ENCODE measurements at regions of chr12 and their contacts with region 1.

Region 1: DNA sequence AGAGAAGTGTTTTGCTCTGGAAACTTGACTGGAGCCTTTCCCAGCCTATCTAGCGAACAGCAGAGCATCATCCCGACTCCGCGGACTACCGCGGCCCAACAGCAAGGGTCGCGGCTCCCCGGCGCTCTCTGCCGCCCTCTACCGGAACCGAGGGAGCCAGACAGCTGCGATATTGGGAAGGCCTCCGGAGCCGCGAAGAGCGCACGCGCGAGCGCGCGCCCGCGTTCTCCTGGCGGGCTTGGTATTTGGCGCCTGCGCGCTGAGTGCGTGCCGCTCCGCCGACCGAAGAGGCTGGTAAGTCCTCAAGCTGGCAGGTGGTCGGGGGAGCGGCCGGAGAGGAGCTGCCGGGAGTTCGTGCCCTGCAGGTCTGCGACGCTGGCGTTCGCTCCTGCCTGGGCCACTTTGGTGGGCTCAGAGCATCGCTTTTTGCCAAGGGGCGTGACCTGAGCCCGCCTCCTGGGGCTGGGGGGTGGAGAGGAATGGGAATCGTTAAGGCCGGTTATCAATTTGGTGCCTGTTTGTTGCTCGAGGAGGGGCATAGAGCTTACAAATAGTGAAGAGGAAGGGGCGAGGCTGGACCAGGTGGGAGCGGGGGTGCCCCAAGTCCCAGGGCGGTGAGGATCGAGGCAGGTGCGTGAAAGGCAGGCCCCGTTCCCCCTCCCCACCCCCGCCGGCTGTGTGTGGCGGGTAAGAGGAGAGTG is at the start of gene TMEM106C:
- DNase-seq: peak; percentile 80
- ATAC-seq: peak; percentile 96
- H3K4me3 ChIP-seq: peak within 1 kb of the TSS; percentile 79 to 80
- H3K27ac ChIP-seq: peak within 1 kb of the TSS; percentile 73
- H3K4me1 ChIP-seq: peaks cover 3 to 13% of the 10 kb centered on the region in 2 experiments; a peak in 3 of 4 replicates
- H3K27me3 ChIP-seq: no peaks in the 10 kb centered on the region
- CTCF ChIP-seq: peak; percentile 89 to 96 (median 92)
- POLR2A ChIP-seq: peak; percentile 62
- RAD21 ChIP-seq: peak; percentile 67
- total RNA-seq, gene TMEM106C: 94.7 TPM

Region 2: GRCh38 chr12:48000878-48001504 is 37.5 kb after region 1 on chr12:
- CTCF ChIA-PET with region 1: no interaction called
- POLR2A ChIA-PET with region 1: no interaction called
- RAD21 ChIA-PET with region 1: no interaction called
- intact Hi-C with region 1: no loop called
- DNase-seq: peak; percentile 1
- ATAC-seq: peak; percentile 69
- H3K4me3 ChIP-seq: peak overlapping the region; percentile 64 to 70
- H3K27ac ChIP-seq: no peak overlapping the region
- H3K4me1 ChIP-seq: peaks cover 9 to 21% of the 10 kb centered on the region in 2 experiments
- H3K27me3 ChIP-seq: peaks cover 14% of the 10 kb centered on the region; the same call in 1 of the 2 replicates
- CTCF ChIP-seq: no peak
- POLR2A ChIP-seq: no peak
- RAD21 ChIP-seq: no peak

Region 3: GRCh38 chr12:48189331-48190125 is 226.0 kb after region 1 on chr12:
- CTCF ChIA-PET with region 1: interaction called, 6 read pairs
- POLR2A ChIA-PET with region 1: no interaction called
- RAD21 ChIA-PET with region 1: no interaction called
- intact Hi-C with region 1: loop called (anchors 5 kb)
- DNase-seq: peak; percentile 57
- ATAC-seq: peak; percentile 77
- H3K4me3 ChIP-seq: no peak overlapping the region
- H3K27ac ChIP-seq: no peak overlapping the region
- H3K4me1 ChIP-seq: peaks cover 4 to 12% of the 10 kb centered on the region in 2 experiments; a peak in 2 of 4 replicates
- H3K27me3 ChIP-seq: no peaks in the 10 kb centered on the region
- CTCF ChIP-seq: peak; percentile 72 to 90 (median 85); a peak in 5 of 6 replicates
- POLR2A ChIP-seq: no peak
- RAD21 ChIP-seq: peak; percentile 80